ENCODE measurements at regions of chr12 and their contacts with region 1.

Region 1: GRCh38 chr12:8078398-8078797 is 3.7 kb upstream of the NECAP1 start:
- DNase-seq: peak; percentile 72
- ATAC-seq: no peak
- H3K4me3 Mint-ChIP-seq: no peak overlapping the region
- H3K27ac Mint-ChIP-seq: no peak overlapping the region
- H3K4me1 Mint-ChIP-seq: peaks cover 31% of the 10 kb centered on the region
- H3K27me3 Mint-ChIP-seq: no peaks in the 10 kb centered on the region

Region 2: DNA sequence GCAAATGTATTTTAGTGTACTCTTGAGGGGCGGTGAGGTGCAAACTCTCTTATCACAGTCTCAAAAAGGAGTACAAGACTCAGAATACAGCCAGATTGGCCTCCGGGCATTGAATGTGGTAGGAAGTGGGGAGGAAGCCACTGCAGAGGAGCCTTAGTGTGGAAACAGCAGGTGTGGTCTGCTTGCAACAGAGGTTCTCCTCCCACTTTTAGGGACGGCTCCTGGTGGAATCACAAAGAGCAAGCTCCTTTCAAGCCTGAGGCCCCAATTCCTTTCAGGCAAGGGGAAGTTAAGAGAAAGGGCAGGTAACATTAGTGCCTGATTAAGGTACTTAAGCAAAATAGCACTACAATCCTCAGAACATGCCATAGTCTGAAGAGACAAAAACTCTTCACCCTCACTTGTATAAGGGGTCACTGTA is 118.7 kb before region 1 on chr12:
- CTCF ChIA-PET with region 1: interaction called, 12 read pairs
- POLR2A ChIA-PET with region 1: interaction called, 4 read pairs
- DNase-seq: peak; percentile 78
- ATAC-seq: peak; percentile 72
- H3K4me3 Mint-ChIP-seq: peak overlapping the region; percentile 85
- H3K27ac Mint-ChIP-seq: peak overlapping the region; percentile 91
- H3K4me1 Mint-ChIP-seq: peaks cover 42% of the 10 kb centered on the region
- H3K27me3 Mint-ChIP-seq: no peaks in the 10 kb centered on the region

Region 3: DNA sequence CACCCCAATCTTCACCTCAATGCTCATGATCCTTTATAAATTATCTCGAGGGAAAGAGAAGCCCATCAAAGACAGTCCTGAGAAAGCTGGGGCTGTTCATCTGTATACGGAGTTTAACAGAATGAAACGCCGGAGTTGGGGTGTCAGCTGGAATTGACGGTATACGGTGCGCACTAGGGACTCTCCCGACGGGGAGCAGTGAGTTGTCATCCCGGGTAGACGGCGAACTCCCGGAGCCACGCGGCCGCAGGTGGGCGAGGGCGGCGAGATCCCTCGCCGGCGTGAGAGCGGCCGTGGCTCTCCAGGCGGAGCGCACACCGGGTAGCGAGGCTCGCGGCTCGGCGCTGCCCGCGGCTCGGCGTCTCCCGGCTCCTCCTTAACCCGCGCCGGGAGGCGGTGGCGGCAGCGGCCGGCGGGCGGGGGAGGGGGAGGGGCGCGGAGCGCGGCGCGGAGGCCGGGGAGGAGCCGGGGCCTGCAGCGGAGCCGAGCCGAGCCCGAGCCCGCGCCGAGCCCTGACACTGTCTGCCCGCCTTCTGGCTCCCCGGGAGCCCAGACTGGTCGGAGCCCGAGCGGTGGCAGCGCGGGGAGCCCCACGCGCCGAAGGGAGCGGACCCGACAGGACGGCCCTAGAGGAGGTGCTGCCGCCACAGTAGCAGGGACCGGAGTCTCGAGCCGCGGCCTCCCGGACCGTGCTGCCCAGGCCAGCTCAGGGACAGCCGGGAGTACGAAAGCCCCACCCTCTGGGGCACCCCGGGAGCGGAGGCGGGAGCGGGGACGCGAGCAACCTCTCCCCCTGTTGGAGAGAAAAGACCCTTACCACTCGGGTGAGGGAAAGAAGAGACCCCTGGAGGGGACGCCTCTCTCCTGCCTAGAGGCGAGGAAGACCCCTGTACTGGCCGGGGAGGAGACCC is 45.9 kb before region 1 on chr12 and contains the start of gene FOXJ2:
- CTCF ChIA-PET with region 1: interaction called, 235 read pairs
- POLR2A ChIA-PET with region 1: interaction called, 6 read pairs
- DNase-seq: peak; percentile 81
- ATAC-seq: peak; percentile 93
- H3K4me3 Mint-ChIP-seq: peak within 1 kb of the TSS; percentile 83
- H3K27ac Mint-ChIP-seq: peak within 1 kb of the TSS; percentile 74
- H3K4me1 Mint-ChIP-seq: peaks cover 49% of the 10 kb centered on the region
- H3K27me3 Mint-ChIP-seq: peaks cover 4% of the 10 kb centered on the region
- total RNA-seq, gene FOXJ2: 16.9 to 17.1 TPM

Region 4: GRCh38 chr12:8045952-8046944 is 32.1 kb before region 1 on chr12:
- CTCF ChIA-PET with region 1: interaction called, 235 read pairs
- POLR2A ChIA-PET with region 1: interaction called, 7 read pairs
- DNase-seq: peak; percentile 88
- ATAC-seq: peak; percentile 82
- H3K4me3 Mint-ChIP-seq: no peak overlapping the region
- H3K27ac Mint-ChIP-seq: peak overlapping the region; percentile 18
- H3K4me1 Mint-ChIP-seq: peaks cover 9% of the 10 kb centered on the region
- H3K27me3 Mint-ChIP-seq: no peaks in the 10 kb centered on the region

Region 5: GRCh38 chr12:8065991-8066594 is 12.3 kb before region 1 on chr12 and contains the start of gene C3AR1:
- CTCF ChIA-PET with region 1: interaction called, 47 read pairs
- POLR2A ChIA-PET with region 1: interaction called, 3 read pairs
- DNase-seq: peak; percentile 63
- ATAC-seq: peak; percentile 100
- H3K4me3 Mint-ChIP-seq: peak within 1 kb of the TSS; percentile 71
- H3K27ac Mint-ChIP-seq: peak within 1 kb of the TSS; percentile 82
- H3K4me1 Mint-ChIP-seq: peaks cover 41% of the 10 kb centered on the region
- H3K27me3 Mint-ChIP-seq: no peaks in the 10 kb centered on the region
- total RNA-seq, gene C3AR1: 8.8 to 9.1 TPM

Region 6: GRCh38 chr12:8088574-8088973 is 10.2 kb after region 1 on chr12:
- CTCF ChIA-PET with region 1: interaction called, 24 read pairs
- POLR2A ChIA-PET with region 1: no interaction called
- DNase-seq: peak; percentile 64
- ATAC-seq: peak; percentile 86
- H3K4me3 Mint-ChIP-seq: peak overlapping the region; percentile 64
- H3K27ac Mint-ChIP-seq: peak overlapping the region; percentile 92
- H3K4me1 Mint-ChIP-seq: peaks cover 55% of the 10 kb centered on the region
- H3K27me3 Mint-ChIP-seq: no peaks in the 10 kb centered on the region

Region 7: DNA sequence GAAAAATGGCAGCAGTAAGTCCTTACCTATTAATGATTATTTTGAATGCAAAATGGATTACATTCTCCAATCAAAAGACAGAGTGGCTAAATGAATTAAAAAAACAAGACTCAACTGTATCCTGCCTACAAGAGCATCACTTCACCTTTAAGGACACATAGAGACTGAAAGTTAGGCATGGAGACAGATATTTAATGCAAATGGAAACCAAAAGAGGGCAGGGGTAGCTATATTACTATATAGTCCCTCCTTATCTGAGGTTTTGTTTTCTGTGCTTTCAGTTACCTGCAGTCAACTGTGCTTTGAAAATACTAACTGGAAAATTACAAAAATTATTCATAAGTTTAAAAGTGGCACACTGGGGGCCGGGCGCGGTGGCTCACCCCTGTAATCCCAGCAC is 20.8 kb after region 1 on chr12:
- CTCF ChIA-PET with region 1: no interaction called
- POLR2A ChIA-PET with region 1: no interaction called
- DNase-seq: no peak
- ATAC-seq: no peak
- H3K4me3 Mint-ChIP-seq: no peak overlapping the region
- H3K27ac Mint-ChIP-seq: no peak overlapping the region
- H3K4me1 Mint-ChIP-seq: peaks cover 7% of the 10 kb centered on the region
- H3K27me3 Mint-ChIP-seq: no peaks in the 10 kb centered on the region

Measured in activated CD8-positive, alpha-beta T cell treated with anti-CD3 and anti-CD28 coated beads, Interleukin-2, amount 10 ng/mL, durations not matched to agents 7 days and 5 days (primary cell).